Right ventricle myocardium inferior (tissue), 1 donor: ENCODE measurements at regions of chr12 and their contacts with region 1.

Region 1: GRCh38 chr12:112937741-112938719 is at the start of gene OAS3:
- DNase-seq: peak; percentile 93
- ATAC-seq: peak; percentile 95
- total RNA-seq, gene OAS3: 5.7 TPM

Region 2: DNA sequence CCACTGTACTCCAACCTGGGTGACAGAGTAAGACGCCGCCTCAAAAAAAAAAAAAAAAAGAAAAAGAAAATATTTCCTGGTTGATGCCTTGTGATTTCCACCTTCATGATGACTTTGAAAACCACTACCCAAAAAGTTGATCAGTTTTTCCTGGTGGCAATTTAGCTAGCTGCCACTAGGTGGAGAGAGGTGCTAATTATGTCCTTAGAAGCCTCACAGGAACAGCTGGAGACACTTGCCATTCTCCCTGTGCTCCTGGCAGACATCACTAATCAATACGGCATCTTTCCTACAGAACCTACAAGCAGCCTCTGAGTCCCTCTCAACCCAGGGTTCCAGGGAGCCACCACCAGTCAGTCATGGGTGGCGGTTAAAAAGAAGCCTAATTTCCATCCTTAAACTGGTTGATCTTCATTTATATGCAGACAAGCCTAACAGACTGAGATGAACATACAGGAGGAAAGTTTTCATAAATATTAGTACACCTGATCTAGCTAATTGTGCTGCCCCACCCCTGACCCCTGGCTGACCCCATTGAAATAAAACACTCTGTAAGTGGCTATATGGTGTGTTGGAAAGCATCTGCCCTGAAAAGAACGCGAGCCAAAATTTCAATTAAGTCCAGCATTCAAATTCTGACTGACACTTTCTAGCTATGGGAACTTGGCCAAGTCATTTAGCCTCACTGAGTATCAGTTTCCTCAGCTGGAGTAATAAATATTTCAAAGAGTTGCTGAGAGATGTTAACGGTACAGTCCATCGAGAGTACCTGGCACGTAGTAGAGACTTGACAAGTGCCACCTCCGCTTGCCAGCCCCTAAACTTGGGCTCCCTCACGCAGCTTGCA is 37.5 kb before region 1 on chr12:
- intact Hi-C with region 1: loop called (anchors 5 kb)
- DNase-seq: no peak
- ATAC-seq: no peak

Region 3: GRCh38 chr12:112978163-112979040 is 40.4 kb after region 1 on chr12 and contains the start of gene OAS2:
- intact Hi-C with region 1: loop called (anchors 5 kb)
- DNase-seq: peak; percentile 71
- ATAC-seq: peak; percentile 94
- total RNA-seq, gene OAS2: 5.0 TPM